WTC11 (cell line): ENCODE measurements at regions of chr17 and their contacts with region 1.

Region 1: DNA sequence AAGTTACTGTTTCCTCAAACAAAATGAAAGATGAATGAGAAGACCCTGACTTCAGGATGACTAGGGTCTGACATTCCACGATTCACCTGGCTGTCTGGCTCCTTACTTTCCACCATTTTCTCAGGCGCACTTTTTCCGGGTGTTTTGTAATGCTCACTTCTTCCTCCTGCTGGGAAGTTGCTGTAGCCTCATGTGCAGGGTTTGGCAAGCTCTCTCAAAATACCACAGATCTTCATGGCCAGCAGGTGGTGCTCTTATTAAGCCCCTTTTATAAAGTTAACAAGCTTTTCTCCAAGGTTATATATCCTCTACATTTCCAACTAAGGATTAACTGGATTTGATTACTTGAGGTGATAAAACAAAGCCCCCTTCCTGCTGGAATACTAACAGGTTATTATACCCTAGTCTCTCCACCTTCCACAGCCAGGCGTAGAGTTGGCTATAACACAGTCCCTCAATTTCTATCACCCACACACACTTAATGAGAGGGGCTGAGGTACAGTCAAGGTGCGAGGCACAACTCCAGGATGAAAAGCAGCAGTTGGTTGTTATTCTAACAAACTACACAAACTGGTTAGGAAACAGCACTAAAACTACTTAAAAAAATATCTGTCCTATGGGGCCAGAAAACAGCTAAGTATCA is 45.4 kb downstream of the STH start:
- DNase-seq: peak; percentile 56
- ATAC-seq: peak; percentile 87
- H3K4me3 Mint-ChIP-seq: no peak overlapping the region
- H3K27ac Mint-ChIP-seq: peak overlapping the region; percentile 84
- H3K4me1 Mint-ChIP-seq: peaks cover 11% of the 10 kb centered on the region
- H3K27me3 Mint-ChIP-seq: no peaks in the 10 kb centered on the region
- CTCF ChIP-seq: peak; percentile 24; the same call in 1 of the 2 replicates

Region 2: DNA sequence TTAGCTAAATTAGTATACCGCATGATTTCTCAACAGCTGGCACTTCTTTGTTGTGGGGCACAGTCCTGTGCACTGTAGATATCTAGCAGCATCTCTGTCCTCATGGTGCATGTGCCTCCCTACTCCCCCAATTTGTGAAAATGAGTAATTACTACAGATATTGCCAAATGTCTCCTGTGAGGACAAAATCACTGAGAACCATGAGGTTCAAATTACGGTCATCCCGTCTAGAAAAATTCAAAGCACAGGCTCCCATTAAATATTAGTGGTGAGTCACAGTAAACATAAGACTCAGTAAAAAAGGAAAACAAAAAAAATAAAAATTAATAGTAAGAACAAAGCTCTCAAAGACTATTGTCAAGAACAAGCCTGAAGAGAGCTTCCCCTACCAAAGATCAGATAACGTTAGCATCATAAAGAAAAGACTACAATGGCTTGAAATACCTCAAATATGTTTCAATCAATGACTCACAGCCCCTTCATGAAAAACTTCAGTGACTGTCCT is 12.4 kb after region 1 on chr17:
- CTCF ChIA-PET with region 1: interaction called, 40 read pairs
- POLR2A ChIA-PET with region 1: interaction called, 7 read pairs
- DNase-seq: no peak
- ATAC-seq: no peak
- H3K4me3 Mint-ChIP-seq: no peak overlapping the region
- H3K27ac Mint-ChIP-seq: peak overlapping the region; percentile 73; the same call in 1 of the 2 replicates
- H3K4me1 Mint-ChIP-seq: peaks cover 38% of the 10 kb centered on the region
- H3K27me3 Mint-ChIP-seq: no peaks in the 10 kb centered on the region
- CTCF ChIP-seq: no peak

Region 3: DNA sequence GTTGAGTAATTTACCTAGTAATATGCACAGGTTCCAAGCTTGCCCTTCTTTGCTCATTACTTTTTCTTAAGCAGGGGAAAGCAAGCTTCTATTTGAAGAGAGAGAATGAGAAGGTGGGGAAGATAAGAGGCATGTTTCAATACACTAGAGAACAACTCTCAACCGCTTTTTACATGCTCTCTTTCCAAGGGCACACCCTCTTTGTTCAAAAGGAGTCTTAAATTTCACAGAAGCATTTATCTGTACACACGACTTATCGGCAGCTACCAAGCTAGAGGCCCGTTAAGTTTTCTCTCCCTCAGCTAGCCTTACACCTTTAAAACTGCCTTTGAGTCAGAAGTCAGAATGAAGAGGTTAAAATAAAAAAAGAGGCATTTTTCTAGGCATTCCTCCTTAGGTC is 34.3 kb after region 1 on chr17:
- CTCF ChIA-PET with region 1: interaction called, 18 read pairs
- POLR2A ChIA-PET with region 1: interaction called, 3 read pairs
- DNase-seq: no peak
- ATAC-seq: no peak
- H3K4me3 Mint-ChIP-seq: no peak overlapping the region
- H3K27ac Mint-ChIP-seq: peak overlapping the region; percentile 88
- H3K4me1 Mint-ChIP-seq: peaks cover 42% of the 10 kb centered on the region
- H3K27me3 Mint-ChIP-seq: no peaks in the 10 kb centered on the region
- CTCF ChIP-seq: no peak

Region 4: GRCh38 chr17:46199379-46199778 is 155.0 kb after region 1 on chr17:
- CTCF ChIA-PET with region 1: no interaction called
- POLR2A ChIA-PET with region 1: no interaction called
- DNase-seq: no peak
- ATAC-seq: no peak
- H3K4me3 Mint-ChIP-seq: no peak overlapping the region
- H3K27ac Mint-ChIP-seq: no peak overlapping the region
- H3K4me1 Mint-ChIP-seq: peaks cover 6% of the 10 kb centered on the region
- H3K27me3 Mint-ChIP-seq: 0 out of 2 replicates have a peak, but pooled peaks cover 2% of the 10 kb centered on the region
- CTCF ChIP-seq: no peak